Vagina (tissue), 2 donors: ENCODE measurements at regions of chr7 and their contacts with region 1.

Region 1: GRCh38 chr7:106112117-106112971 is at the start of gene SYPL1:
- DNase-seq: peak in 1 of 2 donors; percentile 94
- H3K4me3 ChIP-seq: peak within 1 kb of the TSS; percentile 76 to 88
- H3K27ac ChIP-seq: peak within 1 kb of the TSS; percentile 98
- H3K4me1 ChIP-seq: peaks cover 41% of the 10 kb centered on the region
- H3K27me3 ChIP-seq: no peaks in the 10 kb centered on the region
- CTCF ChIP-seq: no peak
- POLR2A ChIP-seq: peak in 1 of 2 donors; percentile 68
- total RNA-seq, gene SYPL1: 76.9 TPM

Region 2: GRCh38 chr7:106022193-106022821 is 90.0 kb before region 1 on chr7:
- intact Hi-C with region 1: no loop called
- DNase-seq: no peak
- H3K4me3 ChIP-seq: no peak overlapping the region
- H3K27ac ChIP-seq: no peak overlapping the region
- H3K4me1 ChIP-seq: no peaks in the 10 kb centered on the region
- H3K27me3 ChIP-seq: no peaks in the 10 kb centered on the region
- CTCF ChIP-seq: no peak
- POLR2A ChIP-seq: no peak

Region 3: DNA sequence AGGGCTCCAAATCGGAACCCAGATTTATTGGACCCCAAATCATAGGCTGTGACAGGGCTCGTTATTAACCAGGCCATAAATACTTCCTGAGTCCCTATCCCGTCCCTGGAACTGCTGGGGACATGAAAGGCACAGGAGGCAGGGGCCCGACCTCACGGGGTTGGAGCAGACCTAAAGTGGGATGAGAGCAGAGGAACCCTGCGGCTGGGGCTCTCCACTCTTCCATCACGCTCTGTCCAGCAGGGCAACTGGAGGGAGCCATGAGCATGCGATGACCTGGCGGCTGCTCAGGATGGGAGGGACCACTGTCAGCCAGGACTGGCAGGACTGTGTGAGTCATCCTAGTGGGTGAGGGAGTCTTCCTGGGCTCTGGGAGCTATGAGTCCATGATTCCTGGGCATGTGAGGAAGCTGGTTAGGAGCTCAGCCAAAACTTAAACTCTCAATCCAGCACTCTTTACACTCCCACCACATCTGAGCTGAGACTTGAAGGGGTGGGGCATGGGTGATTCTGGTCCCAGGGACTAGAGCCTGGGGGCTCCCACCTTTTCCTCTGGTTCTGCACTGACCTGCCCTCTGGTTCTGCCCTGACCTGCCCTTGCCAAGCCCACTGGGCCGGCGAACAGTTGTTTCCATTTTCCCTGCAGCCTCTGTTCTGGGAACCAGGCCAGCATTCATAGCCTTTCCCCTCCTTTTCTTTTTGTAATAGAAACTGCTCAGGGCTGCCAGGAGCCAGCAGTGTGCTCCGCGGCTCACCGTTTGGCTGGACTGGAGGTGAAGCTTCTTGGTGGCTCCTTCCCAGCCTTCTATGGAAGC is 47.4 kb before region 1 on chr7:
- intact Hi-C with region 1: loop called (anchors 5 kb)
- DNase-seq: peak; percentile 92 to 97
- H3K4me3 ChIP-seq: peak overlapping the region; percentile 7 to 26
- H3K27ac ChIP-seq: peak overlapping the region; percentile 84
- H3K4me1 ChIP-seq: peaks cover 59% of the 10 kb centered on the region
- H3K27me3 ChIP-seq: no peaks in the 10 kb centered on the region
- CTCF ChIP-seq: no peak
- POLR2A ChIP-seq: no peak